ENCODE measurements at regions of chr1 and their contacts with region 1.

Region 1: GRCh38 chr1:99969729-99970621 is at the start of gene SLC35A3:
- DNase-seq: peak; percentile 9 to 85
- H3K4me3 ChIP-seq: peak within 1 kb of the TSS; percentile 82 to 85
- H3K27ac ChIP-seq: peak within 1 kb of the TSS; percentile 66 to 76
- H3K4me1 ChIP-seq: peaks cover 2 to 4% of the 10 kb centered on the region in 2 donors
- H3K27me3 ChIP-seq: no peaks in the 10 kb centered on the region
- CTCF ChIP-seq: no peak
- total RNA-seq, gene SLC35A3: 8.4 TPM

Region 2: DNA sequence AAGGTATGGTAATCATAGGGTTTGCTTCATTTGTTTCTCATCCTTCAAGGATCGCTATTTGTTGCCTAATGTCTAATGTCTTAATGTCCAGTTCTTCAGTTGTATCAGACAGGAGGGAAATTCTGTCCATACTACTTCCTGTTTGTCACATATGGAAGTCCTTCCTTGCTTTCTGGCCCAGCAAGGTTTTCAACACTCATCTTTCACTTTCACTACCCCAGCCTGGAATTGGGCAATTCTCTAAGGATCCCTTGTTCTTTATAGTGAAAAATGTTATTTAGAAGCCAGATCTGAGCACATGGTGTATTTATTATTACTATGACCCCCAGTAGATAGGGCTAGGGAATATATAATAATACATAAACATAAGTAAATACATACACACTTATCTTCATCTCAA is 50.8 kb before region 1 on chr1:
- intact Hi-C with region 1: loop called (anchors 5 kb)
- DNase-seq: no peak
- H3K4me3 ChIP-seq: no peak overlapping the region
- H3K27ac ChIP-seq: no peak overlapping the region
- H3K4me1 ChIP-seq: no peaks in the 10 kb centered on the region
- H3K27me3 ChIP-seq: no peaks in the 10 kb centered on the region
- CTCF ChIP-seq: no peak